Tibial artery (tissue), 4 donors: ENCODE measurements at regions of chr19 and their contacts with region 1.

Region 1: GRCh38 chr19:17718947-17719711 is at the start of gene MAP1S:
- DNase-seq: peak; percentile 47 to 79
- H3K4me3 ChIP-seq: peak within 1 kb of the TSS; percentile 66 to 71
- H3K27ac ChIP-seq: peak within 1 kb of the TSS; percentile 62 to 65
- H3K4me1 ChIP-seq: peaks cover 0 to 56% (median 44%) of the 10 kb centered on the region in 4 donors
- H3K27me3 ChIP-seq: no peaks in the 10 kb centered on the region
- CTCF ChIP-seq: no peak

Region 2: GRCh38 chr19:17680235-17680722 is 38.9 kb before region 1 on chr19:
- intact Hi-C with region 1: loop called (anchors 5 kb)
- DNase-seq: peak; percentile 82 to 94
- H3K4me3 ChIP-seq: peak overlapping the region; percentile 45 to 47
- H3K27ac ChIP-seq: peak overlapping the region; percentile 54 to 85
- H3K4me1 ChIP-seq: peaks cover 8 to 34% (median 15%) of the 10 kb centered on the region in 4 donors
- H3K27me3 ChIP-seq: peaks cover 0 to 27% of the 10 kb centered on the region in 2 donors
- CTCF ChIP-seq: no peak

Region 3: DNA sequence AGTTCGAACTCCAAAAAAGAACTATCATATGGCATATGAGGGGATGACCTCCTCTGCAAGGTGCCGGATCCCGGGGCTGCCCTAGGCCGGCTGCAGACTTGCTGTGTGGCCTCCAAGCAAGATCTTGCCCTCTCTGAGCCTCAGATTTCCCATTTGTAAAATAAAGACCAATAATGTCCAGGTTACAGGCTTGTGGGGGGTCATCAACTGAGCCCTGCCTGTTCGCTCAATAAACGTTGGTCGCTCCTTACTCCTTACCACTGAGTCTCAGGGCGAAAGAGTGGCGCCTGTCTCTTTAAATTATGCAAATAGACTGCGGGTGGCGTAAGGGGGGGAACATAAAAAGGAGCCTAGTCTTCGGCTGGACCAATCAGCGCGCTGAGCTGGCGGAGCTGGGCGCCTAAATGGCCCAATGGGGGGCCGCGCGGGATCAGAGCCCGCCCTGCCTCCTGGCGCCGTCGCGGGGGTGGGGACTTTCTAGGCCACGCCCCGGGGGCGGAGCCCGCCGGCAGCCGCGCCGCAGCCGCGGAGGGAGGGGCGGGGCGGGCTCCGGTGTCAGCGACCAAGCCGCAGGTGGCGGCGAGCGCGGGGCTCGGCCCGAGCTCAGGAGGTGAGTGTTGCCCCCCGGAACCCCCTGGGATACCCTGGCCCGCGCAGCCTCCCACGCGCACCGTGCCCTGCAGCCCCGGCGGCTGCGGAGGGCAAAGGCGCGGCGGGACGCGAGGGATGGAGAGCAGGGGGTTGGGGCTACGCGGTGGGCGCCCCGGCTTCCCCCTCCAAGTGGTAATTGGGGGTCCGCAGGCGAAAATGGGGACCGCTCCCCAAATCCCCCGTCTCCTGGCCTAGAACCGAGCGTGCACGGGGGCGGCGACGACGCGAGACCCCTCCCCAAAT is 28.3 kb after region 1 on chr19:
- intact Hi-C with region 1: loop called (anchors 1 kb)
- DNase-seq: peak; percentile 90 to 93
- H3K4me3 ChIP-seq: peak overlapping the region; percentile 42 to 53
- H3K27ac ChIP-seq: no peak overlapping the region
- H3K4me1 ChIP-seq: peaks cover 0 to 14% (median 9%) of the 10 kb centered on the region in 4 donors
- H3K27me3 ChIP-seq: peaks cover 0 to 6% of the 10 kb centered on the region in 2 donors
- CTCF ChIP-seq: no peak

Region 4: GRCh38 chr19:17784201-17785008 is 65.3 kb after region 1 on chr19:
- intact Hi-C with region 1: no loop called
- DNase-seq: peak; percentile 53 to 71
- H3K4me3 ChIP-seq: no peak overlapping the region
- H3K27ac ChIP-seq: no peak overlapping the region
- H3K4me1 ChIP-seq: peaks cover 0 to 4% (median 2%) of the 10 kb centered on the region in 4 donors
- H3K27me3 ChIP-seq: peaks cover 0 to 58% of the 10 kb centered on the region in 2 donors
- CTCF ChIP-seq: peak; percentile 74 to 75

Region 5: GRCh38 chr19:18117692-18118378 is 398.7 kb after region 1 on chr19:
- intact Hi-C with region 1: no loop called
- DNase-seq: peak; percentile 76 to 92
- H3K4me3 ChIP-seq: peak overlapping the region; percentile 56 to 68
- H3K27ac ChIP-seq: peak overlapping the region; percentile 58 to 68
- H3K4me1 ChIP-seq: peaks cover 0 to 24% (median 18%) of the 10 kb centered on the region in 4 donors
- H3K27me3 ChIP-seq: no peaks in the 10 kb centered on the region
- CTCF ChIP-seq: no peak